Gastrocnemius medialis (tissue), 4 donors: ENCODE measurements at regions of chr17 and their contacts with region 1.

Region 1: DNA sequence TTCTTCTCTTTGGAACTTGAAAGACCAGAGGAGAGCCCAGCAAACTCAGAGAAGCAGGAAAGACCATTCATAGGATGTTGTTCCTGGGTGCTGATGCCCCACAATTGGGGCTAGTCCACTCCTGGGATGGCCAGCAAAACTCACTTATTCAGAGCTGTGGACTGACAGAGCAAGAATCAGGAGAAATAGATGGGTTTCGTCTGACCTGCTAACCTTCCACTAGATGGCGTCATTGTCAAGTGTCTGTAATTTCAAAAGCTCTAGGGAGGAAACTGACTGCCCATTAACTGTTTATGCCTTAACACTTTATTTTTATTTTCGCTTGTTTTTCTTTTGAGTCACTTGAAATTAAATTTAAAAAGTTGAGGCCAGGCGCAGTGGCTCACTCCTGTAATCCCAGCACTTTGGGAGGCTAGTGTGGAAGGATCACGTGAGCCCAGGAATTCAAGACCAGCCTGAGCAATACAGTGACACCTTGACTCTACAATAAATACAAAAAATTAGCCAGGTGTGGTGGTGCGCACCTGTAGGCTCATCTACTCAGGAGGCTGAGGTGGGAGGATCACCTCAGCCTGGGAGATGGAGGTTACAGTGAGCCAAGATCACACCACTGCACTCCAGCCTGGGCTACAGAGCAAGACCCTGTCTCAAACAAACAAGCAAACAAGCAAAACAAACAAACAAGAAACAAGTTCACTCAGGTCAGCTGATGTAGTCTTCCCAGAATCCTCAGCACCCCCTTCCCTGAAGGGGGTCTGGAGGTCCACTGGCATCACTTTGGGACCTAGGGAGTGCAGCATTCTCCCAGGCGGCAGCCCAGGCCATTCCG is 28.6 kb upstream of the MILR1 start:
- DNase-seq: no peak
- ATAC-seq: peak; percentile 85
- H3K4me3 ChIP-seq: no peak overlapping the region
- H3K27ac ChIP-seq: no peak overlapping the region
- H3K4me1 ChIP-seq: peaks cover 0 to 5% of the 10 kb centered on the region in 2 donors
- H3K27me3 ChIP-seq: no peaks in the 10 kb centered on the region
- CTCF ChIP-seq: peak; percentile 50 to 71 (median 63)
- POLR2A ChIP-seq: no peak

Region 2: DNA sequence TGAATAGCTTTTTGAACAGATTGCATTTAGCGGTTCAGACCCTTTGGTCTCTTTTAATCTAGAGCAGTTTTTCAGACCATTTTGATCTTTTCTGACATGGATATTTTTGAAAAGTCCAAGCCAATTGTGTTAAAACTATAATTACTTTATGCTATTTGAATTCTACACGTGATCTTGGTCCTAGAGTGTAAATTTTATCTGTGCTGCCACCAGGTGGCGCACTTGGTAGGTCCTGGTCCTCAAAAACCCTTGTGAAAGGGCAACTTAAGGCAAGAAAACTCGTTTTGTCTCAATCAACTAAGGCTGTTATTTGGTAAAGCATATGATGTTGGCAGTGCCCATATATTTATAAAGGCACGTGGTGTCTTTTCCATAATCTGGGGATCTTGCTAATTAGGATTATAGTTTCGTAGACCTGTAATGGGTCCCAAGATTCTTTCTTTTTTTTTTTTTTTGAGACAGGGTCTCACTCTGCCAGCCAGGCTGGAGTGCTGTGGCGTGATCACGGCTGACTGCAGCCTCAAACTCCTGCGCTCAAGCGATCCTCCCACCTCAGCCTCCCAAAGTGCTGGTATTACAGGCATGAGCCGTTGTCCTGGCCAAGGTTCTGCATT is 113.4 kb before region 1 on chr17:
- in situ Hi-C with region 1: loop called in 2 of 4 experiments (anchors 5 to 10 kb)
- intact Hi-C with region 1: loop called (anchors 1 kb)
- DNase-seq: peak in 1 of 2 donors; percentile 45
- ATAC-seq: peak in 1 of 2 donors; percentile 55
- H3K4me3 ChIP-seq: no peak overlapping the region
- H3K27ac ChIP-seq: no peak overlapping the region
- H3K4me1 ChIP-seq: peaks cover 0 to 3% of the 10 kb centered on the region in 2 donors
- H3K27me3 ChIP-seq: no peaks in the 10 kb centered on the region
- CTCF ChIP-seq: peak; percentile 67 to 82 (median 71)
- POLR2A ChIP-seq: no peak

Region 3: GRCh38 chr17:64320613-64321553 is 99.5 kb before region 1 on chr17:
- in situ Hi-C with region 1: loop called in 3 of 4 experiments (anchors 5 to 10 kb)
- intact Hi-C with region 1: loop called (anchors 1 kb)
- DNase-seq: peak; percentile 27 to 36
- ATAC-seq: peak; percentile 67 to 78
- H3K4me3 ChIP-seq: peak overlapping the region in 3 of 4 donors; percentile 10 to 19 (median 14)
- H3K27ac ChIP-seq: peak overlapping the region in 3 of 4 donors; percentile 29 to 53 (median 50)
- H3K4me1 ChIP-seq: peaks cover 6 to 20% of the 10 kb centered on the region in 2 donors
- H3K27me3 ChIP-seq: no peaks in the 10 kb centered on the region
- CTCF ChIP-seq: peak; percentile 65 to 77 (median 69)
- POLR2A ChIP-seq: no peak

Region 4: DNA sequence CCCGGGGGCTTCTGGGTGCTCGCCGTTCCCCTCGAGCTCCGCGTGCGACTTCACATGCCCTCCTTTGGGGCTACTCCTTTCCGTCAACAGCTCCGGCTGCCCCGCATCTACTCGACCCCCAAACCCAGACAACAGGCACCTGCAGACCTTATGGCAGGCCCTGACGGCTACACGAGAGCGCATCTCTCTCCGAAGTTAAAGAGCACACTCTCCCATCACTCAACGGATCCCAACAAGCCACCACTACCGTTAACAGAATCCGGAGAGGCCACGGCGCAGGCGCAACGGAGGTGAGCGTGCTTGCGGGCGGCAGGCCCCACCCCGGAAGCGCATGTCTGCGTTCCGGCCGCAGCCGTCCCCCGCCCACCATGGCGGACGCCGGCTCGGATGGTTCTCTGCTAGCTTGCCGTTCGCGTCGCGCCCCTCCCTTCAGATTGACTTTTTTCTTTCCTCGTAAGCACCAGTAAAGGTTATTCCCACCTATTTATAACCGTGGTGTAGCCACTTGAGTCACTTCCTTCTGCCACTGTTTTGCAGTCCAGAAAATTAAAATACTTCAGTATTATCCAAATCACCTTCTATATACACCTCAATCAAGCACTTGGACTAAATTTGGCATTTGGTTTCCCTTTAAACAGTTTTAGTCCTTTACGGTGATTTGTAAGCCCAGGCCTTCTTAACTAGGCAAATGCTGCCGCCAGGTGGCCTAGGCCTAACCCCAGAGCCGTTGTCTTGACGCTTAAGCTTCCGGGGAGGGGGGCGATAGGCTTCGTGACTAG is 76.6 kb after region 1 on chr17 and contains the start of gene POLG2:
- in situ Hi-C with region 1: no loop called
- intact Hi-C with region 1: loop called (anchors 2 kb)
- DNase-seq: peak; percentile 81 to 91
- ATAC-seq: peak; percentile 93 to 94
- H3K4me3 ChIP-seq: peak within 1 kb of the TSS; percentile 72 to 86 (median 77)
- H3K27ac ChIP-seq: peak within 1 kb of the TSS; percentile 78 to 86 (median 82)
- H3K4me1 ChIP-seq: peaks cover 19 to 44% of the 10 kb centered on the region in 2 donors
- H3K27me3 ChIP-seq: no peaks in the 10 kb centered on the region
- CTCF ChIP-seq: peak; percentile 43 to 61 (median 50)
- POLR2A ChIP-seq: peak; percentile 41 to 52
- total RNA-seq, gene POLG2: 1.4 to 5.6 (median 2.6) TPM

Region 5: DNA sequence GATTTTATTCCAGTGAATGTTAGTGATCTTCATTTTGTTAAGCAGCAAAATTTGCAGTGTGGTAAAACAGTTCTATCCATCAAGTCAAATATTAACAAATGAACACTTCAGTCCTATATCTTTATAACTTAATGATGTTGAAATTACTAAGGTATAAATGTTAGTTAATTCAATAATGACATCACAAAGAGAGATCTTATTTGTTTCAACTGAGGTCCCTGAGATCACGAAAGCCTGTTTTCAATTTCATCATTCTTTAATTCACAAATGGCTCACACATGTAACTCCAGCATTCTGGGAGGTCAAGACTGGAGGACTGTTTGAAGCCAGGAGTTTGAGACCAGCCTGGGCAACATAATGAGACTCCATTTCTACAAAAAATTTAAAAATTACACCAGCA is 227.9 kb after region 1 on chr17:
- in situ Hi-C with region 1: loop called in 1 of 4 experiments (anchors 10 kb)
- intact Hi-C with region 1: loop called (anchors 10 kb)
- DNase-seq: no peak
- ATAC-seq: no peak
- H3K4me3 ChIP-seq: no peak overlapping the region
- H3K27ac ChIP-seq: no peak overlapping the region
- H3K4me1 ChIP-seq: peaks cover 4 to 5% of the 10 kb centered on the region in 2 donors
- H3K27me3 ChIP-seq: no peaks in the 10 kb centered on the region
- CTCF ChIP-seq: no peak
- POLR2A ChIP-seq: no peak